ENCODE measurements at regions of chr12 and their contacts with region 1.

Region 1: DNA sequence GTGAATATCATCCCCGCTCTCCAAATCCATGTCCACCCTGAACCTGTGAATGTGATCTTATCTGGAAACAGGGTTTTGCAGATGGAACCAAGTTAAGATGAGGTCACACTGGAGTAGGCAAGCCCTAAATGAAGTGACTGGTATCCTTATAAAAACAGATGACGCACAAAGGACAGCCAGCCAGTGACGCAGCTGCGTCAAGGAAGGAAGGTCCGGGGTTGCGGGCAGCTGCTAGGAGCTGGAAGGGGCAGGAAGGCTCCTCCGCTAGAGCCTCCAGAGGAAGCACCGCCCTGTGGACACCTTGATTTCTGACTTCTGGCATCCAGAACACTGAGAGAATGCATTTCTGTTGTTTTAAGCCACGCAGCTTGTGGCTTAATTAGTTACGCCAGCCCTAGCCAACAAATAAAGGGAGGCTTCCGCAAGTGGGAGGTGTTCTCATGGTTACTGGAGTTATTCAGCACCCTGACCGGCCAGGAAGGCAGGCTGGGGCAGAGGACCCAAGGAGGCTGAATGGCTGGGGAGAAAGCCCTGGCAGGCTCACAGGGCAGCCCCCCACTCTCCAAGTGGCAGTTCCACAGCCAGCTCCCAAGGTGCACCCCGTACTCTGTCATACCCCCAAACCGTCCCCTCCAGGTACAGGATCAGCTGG is 127.6 kb upstream of the NCOR2 start:
- DNase-seq: peak; percentile 36
- H3K4me3 Mint-ChIP-seq: no peak overlapping the region
- H3K27ac Mint-ChIP-seq: no peak overlapping the region
- H3K4me1 Mint-ChIP-seq: peaks cover 44% of the 10 kb centered on the region
- H3K27me3 Mint-ChIP-seq: no peaks in the 10 kb centered on the region
- CTCF ChIP-seq: no peak

Region 2: DNA sequence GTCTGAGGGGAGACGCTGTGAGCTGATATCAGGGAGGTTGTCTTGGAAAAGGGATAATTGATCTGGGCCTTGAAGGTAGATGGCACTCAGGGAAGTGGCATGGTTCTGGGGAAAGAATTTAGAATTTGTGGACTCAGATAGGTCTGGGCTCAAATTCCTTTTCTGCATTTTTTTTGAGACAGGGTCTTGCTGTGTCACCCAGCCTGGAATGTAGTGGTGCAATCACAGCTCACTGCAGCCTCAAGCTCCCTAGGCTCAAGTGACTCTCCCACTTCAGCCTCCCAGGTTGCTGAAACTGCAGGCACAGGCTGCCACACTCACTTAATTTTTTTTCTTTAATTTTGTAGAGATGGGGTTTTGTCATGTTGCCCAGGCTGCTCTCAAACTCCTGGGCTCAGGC is 29.5 kb before region 1 on chr12:
- CTCF ChIA-PET with region 1: no interaction called
- intact Hi-C with region 1: loop called (anchors 1 kb)
- DNase-seq: no peak
- H3K4me3 Mint-ChIP-seq: no peak overlapping the region
- H3K27ac Mint-ChIP-seq: no peak overlapping the region
- H3K4me1 Mint-ChIP-seq: peaks cover 10% of the 10 kb centered on the region
- H3K27me3 Mint-ChIP-seq: no peaks in the 10 kb centered on the region
- CTCF ChIP-seq: no peak

Region 3: DNA sequence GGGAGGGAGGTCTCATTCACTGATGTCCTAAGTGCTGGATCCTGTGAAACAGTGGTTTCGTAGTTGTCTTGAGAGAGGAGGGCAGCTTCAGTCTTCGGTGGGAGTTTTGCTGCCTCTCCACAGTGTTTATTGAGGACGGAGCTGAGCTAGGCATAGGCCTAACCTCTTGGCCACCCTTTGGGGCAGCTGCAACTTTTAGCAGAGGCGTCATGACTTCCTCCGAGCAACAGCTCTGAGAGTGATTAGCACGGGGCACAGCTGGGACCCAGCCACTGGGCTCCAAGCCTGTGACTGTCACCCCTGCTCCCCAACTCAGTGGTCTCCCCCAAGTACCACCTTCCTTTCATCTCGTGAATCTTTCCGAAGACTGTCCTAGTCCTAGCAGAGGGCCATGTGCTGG is 12.3 kb after region 1 on chr12:
- CTCF ChIA-PET with region 1: interaction called, 11 read pairs
- intact Hi-C with region 1: no loop called
- DNase-seq: no peak
- H3K4me3 Mint-ChIP-seq: no peak overlapping the region
- H3K27ac Mint-ChIP-seq: no peak overlapping the region
- H3K4me1 Mint-ChIP-seq: no peaks in the 10 kb centered on the region
- H3K27me3 Mint-ChIP-seq: no peaks in the 10 kb centered on the region
- CTCF ChIP-seq: no peak